A549 (cell line): ENCODE measurements at regions of chr12 and their contacts with region 1.

Region 1: GRCh38 chr12:12786716-12787601 is 1.5 kb downstream of the APOLD1 start:
- DNase-seq: peak; percentile 87 to 91
- ATAC-seq: peak; percentile 90 to 94
- H3K4me3 ChIP-seq: peak overlapping the region; percentile 44
- H3K27ac ChIP-seq: peak overlapping the region; percentile 85 to 94
- H3K4me1 ChIP-seq: peaks cover 35% of the 10 kb centered on the region
- CTCF ChIP-seq: no peak
- EP300 ChIP-seq: no peak
- POLR2A ChIP-seq: peak; percentile 89
- RAD21 ChIP-seq: no peak

Region 2: GRCh38 chr12:12387501-12387900 is 399.5 kb before region 1 on chr12:
- CTCF ChIA-PET with region 1: no interaction called
- POLR2A ChIA-PET with region 1: no interaction called
- DNase-seq: no peak
- ATAC-seq: no peak
- H3K4me3 ChIP-seq: no peak overlapping the region
- H3K27ac ChIP-seq: peak overlapping the region; percentile 18 to 65; a peak in 3 of 6 replicates
- H3K4me1 ChIP-seq: peaks cover 12% of the 10 kb centered on the region
- CTCF ChIP-seq: no peak
- EP300 ChIP-seq: no peak
- POLR2A ChIP-seq: no peak
- RAD21 ChIP-seq: no peak

Region 3: DNA sequence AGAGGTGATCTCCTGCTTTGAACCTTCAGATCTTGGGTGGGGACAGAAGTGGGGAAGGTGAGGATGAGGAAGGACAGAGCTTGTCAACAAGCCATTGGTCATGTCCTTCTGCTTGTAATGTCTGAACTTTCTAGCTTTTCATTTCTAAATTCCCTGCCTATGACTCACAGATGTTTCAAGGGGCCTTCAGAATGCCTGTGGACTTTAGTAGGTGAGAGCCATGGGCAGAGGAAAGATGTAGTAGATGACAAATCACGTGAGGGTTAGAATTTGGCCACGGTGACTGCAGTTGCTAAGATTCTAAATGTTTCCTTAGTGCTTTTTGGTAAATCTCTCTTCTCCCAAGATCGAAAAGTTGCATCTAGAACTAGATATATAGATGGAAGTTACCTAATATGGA is 194.0 kb before region 1 on chr12:
- CTCF ChIA-PET with region 1: no interaction called
- POLR2A ChIA-PET with region 1: no interaction called
- DNase-seq: peak; percentile 35 to 48
- ATAC-seq: peak in 1 of 2 experiments; percentile 63; a peak in 3 of 6 replicates
- H3K4me3 ChIP-seq: no peak overlapping the region
- H3K27ac ChIP-seq: peak overlapping the region; percentile 42 to 56
- H3K4me1 ChIP-seq: peaks cover 9% of the 10 kb centered on the region
- CTCF ChIP-seq: no peak
- EP300 ChIP-seq: no peak
- POLR2A ChIP-seq: no peak
- RAD21 ChIP-seq: no peak

Region 4: DNA sequence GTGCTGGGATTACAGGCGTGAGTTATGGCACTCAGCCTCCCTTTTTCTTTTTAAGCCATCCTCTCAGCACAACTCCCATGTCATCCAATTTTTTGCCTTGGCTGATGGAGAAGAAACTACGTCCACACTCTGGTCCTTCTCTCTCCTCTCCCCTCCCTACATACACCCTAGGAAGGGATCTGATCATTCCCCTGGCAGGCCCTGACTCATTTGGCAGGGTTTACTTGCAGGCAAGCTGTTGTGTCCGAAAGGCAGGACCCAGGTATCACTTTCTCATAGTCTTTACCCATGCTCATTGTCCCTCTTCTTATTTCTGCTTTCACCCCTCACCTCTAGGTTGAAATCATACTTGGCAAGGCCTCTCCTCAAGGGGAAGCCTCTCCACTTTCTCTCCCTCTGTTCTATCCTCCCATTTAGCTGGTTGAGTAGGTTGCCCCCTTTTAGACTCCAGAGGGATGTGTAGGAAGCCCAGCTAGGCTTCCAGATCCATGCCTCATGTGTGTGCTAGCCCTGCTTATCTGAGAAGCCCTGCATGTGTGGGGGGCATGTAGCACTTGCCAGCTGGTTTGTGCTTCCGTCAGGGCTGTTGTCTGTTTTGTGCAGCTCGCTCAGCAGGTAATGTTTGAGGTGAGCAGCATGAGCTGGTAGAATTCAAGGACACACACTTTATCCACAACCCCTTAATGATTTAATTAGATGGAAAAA is 105.7 kb before region 1 on chr12:
- CTCF ChIA-PET with region 1: no interaction called
- POLR2A ChIA-PET with region 1: no interaction called
- DNase-seq: no peak
- ATAC-seq: no peak
- H3K4me3 ChIP-seq: no peak overlapping the region
- H3K27ac ChIP-seq: no peak overlapping the region
- H3K4me1 ChIP-seq: no peaks in the 10 kb centered on the region
- CTCF ChIP-seq: no peak
- EP300 ChIP-seq: no peak
- POLR2A ChIP-seq: no peak
- RAD21 ChIP-seq: no peak

Region 5: GRCh38 chr12:12803186-12803585 is 16.2 kb after region 1 on chr12:
- CTCF ChIA-PET with region 1: interaction called, 74 read pairs
- POLR2A ChIA-PET with region 1: interaction called, 18 read pairs
- DNase-seq: peak; percentile 98 to 100
- ATAC-seq: peak; percentile 91 to 96
- H3K4me3 ChIP-seq: no peak overlapping the region
- H3K27ac ChIP-seq: peak overlapping the region; percentile 89 to 90
- H3K4me1 ChIP-seq: peaks cover 66% of the 10 kb centered on the region
- CTCF ChIP-seq: no peak
- EP300 ChIP-seq: peak; percentile 20 to 50; a peak in 2 of 5 replicates
- POLR2A ChIP-seq: peak; percentile 37; the same call in 1 of the 2 replicates
- RAD21 ChIP-seq: no peak

Region 6: DNA sequence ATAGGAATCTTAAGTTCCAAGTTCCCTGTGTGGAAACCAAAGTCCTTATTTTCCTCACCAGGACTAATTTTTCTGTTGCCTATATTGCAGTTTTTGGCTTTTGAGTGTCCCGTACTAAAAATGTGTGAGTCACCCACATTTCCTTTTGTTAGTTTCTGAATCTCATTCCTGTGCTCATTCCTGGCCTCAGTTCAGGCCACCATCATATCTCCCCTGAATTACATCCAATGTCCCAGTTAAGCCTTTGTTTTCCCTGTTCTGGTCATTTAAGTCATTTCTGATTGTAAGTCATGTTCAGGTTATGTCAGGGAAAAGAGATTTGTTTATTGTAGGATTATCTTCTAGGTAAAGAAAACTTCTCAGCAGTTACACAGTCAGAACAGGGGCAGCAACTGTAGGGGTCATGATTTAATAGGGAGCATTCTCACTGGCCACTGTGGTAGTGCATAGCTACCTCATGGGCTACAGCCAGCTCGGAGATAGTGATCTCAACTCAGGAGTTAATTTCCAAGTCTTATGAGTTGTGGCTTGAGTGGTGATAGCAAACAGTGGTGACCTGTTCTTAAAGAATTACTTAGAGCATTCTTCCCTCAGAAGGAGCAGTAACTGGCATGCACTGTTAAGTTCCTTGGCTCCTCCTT is 32.8 kb after region 1 on chr12:
- CTCF ChIA-PET with region 1: interaction called, 19 read pairs
- POLR2A ChIA-PET with region 1: interaction called, 3 read pairs
- DNase-seq: peak; percentile 50 to 83
- ATAC-seq: peak; percentile 92 to 93
- H3K4me3 ChIP-seq: no peak overlapping the region
- H3K27ac ChIP-seq: peak overlapping the region; percentile 59 to 74
- H3K4me1 ChIP-seq: peaks cover 79% of the 10 kb centered on the region
- CTCF ChIP-seq: no peak
- EP300 ChIP-seq: peak in 1 of 2 experiments; percentile 52; a peak in 1 of 5 replicates
- POLR2A ChIP-seq: no peak
- RAD21 ChIP-seq: no peak

Region 7: DNA sequence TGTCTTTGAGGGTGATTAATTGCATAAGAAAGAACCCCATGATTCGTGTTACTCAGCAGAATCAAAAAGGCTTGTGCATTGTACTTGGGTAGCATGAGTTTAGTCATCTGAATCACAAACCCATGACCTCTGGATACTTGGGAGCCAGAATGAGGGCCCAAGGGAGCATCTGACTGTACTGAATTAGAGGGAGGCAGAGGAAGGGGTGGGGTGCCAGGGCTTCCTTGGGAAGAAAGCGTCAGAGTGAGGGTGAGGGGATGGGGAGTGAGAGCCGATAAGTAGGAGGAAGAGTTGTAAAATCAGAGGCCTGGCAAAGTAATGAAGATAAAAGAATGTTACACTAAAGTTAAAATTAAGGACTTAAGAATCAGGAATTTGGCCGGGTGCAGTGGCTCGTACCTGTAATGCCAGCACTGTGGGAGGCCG is 135.2 kb after region 1 on chr12:
- CTCF ChIA-PET with region 1: interaction called, 11 read pairs
- POLR2A ChIA-PET with region 1: no interaction called
- DNase-seq: peak in 1 of 2 experiments; percentile 56
- ATAC-seq: peak; percentile 11 to 43; a peak in 5 of 6 replicates
- H3K4me3 ChIP-seq: no peak overlapping the region
- H3K27ac ChIP-seq: peak overlapping the region; percentile 15 to 63; a peak in 3 of 6 replicates
- H3K4me1 ChIP-seq: peaks cover 56% of the 10 kb centered on the region
- CTCF ChIP-seq: no peak
- EP300 ChIP-seq: no peak
- POLR2A ChIP-seq: no peak
- RAD21 ChIP-seq: no peak